Esophagus squamous epithelium (tissue), 5 donors: ENCODE measurements at regions of chr3 and their contacts with region 1.

Region 1: DNA sequence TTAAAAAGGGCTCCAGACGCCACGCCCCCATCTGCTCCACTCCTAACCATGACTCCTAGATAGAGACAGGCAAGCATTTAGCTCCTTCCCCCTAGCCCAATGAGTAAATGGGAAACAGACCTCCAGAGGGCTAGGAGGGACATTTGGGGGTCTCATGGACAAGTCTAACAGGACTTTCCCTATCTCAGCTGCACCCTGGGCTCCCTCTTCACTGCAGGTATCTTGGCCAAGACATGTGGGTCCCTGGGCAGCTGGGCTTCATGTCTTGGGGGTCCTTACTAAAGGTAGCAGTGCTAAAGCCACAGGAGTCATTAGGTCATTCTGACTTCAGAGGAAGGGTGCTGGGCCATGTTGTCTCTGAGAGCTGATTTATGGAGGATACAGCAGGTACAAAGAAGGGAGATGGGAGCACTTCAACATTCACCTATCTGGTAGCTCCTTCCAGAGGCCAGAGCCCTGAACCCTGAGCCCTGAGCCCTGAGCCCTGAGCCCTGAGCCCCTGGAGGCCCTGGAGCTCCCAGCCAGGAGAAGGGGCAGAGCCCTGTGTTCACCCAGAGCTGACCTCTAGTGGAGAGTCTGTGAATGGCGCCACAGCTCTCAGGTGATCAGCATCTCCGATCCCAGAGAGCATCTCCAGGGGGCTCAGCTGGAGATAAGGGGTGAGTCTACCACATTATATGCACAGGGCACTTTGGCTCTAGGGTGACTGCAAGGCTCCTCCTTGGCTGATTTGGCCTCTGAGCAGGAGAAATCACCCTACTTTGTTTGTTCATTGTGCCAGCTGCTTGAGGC is 40.1 kb upstream of the EPHB1 start:
- DNase-seq: no peak
- H3K4me3 ChIP-seq: no peak overlapping the region
- H3K27ac ChIP-seq: no peak overlapping the region
- H3K4me1 ChIP-seq: no peaks in the 10 kb centered on the region
- H3K27me3 ChIP-seq: peaks cover 0 to 19% (median 0%) of the 10 kb centered on the region in 4 donors
- CTCF ChIP-seq: peak in 4 of 6 experiments; percentile 42 to 72 (median 52)
- POLR2A ChIP-seq: no peak

Region 2: GRCh38 chr3:134600685-134601463 is 154.1 kb before region 1 on chr3:
- intact Hi-C with region 1: loop called (anchors 10 kb)
- DNase-seq: no peak
- H3K4me3 ChIP-seq: peak overlapping the region in 1 of 4 donors; percentile 36
- H3K27ac ChIP-seq: no peak overlapping the region
- H3K4me1 ChIP-seq: peaks cover 3 to 35% (median 9%) of the 10 kb centered on the region in 3 donors
- H3K27me3 ChIP-seq: peaks cover 0 to 28% (median 0%) of the 10 kb centered on the region in 4 donors
- CTCF ChIP-seq: peak; percentile 66 to 95 (median 88)
- POLR2A ChIP-seq: no peak